ENCODE measurements at regions of chr17 and their contacts with region 1.

Region 1: DNA sequence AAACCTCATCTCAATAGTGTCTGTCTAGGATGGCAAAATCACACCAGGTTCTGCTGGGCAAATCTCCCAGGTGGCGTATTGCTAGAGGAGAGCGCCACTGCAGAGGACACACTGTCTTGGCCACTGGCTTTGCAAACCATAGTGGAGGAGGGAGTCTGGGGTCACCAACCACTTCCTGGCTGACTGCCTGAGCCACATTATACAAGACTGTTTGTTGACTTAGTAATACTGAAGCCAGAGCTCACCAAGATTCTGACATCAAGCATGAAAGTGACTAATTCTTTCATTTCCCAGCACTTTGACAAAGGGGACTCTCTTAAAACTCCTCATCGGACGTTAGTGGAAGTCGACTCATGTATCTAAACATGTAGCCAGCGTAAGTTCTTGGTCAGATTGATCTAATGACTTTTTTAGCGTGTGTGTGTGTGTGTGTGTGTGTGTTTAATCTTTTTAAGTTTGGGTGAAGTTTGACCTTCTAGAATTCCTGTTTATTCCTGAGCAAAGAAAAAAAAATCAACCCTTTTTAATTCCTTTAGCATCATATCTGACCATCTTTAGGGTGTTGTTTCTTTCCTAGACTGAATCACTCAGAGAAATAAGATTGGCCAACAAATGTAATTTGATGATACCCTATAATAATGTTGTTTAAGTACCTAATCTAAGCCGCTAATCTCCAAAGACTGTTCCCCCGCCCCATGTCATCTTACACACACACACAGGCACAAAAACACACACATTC is 13.7 kb downstream of the PITPNC1 start:
- DNase-seq: peak; percentile 96
- H3K4me3 ChIP-seq: peak overlapping the region in 1 of 3 experiments; percentile 26
- H3K27ac ChIP-seq: peak overlapping the region; percentile 84
- H3K4me1 ChIP-seq: peaks cover 16% of the 10 kb centered on the region
- H3K27me3 ChIP-seq: no peaks in the 10 kb centered on the region
- CTCF ChIP-seq: no peak

Region 2: DNA sequence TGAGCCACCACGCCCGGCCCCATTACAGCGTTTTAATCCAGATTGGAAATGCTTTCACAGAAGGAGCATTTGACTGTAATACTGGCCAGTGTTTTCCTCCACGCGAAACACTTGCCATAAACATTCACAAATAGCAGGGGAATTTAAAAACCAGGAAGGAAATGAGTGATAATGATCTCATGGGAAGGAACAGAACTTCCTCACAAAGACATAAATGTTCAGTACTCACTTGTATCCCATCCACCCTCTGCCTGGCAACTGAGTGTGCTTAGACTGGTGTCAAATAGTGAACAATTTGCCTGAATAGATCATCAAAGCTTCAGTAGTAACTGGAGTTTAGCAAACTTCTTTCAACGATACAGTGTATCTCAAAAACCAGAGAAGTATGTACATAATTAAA is 78.5 kb before region 1 on chr17:
- CTCF ChIA-PET with region 1: no interaction called
- dilution Hi-C with region 1: no loop called
- in situ Hi-C with region 1: no loop called
- intact Hi-C with region 1: no loop called
- DNase-seq: no peak
- H3K4me3 ChIP-seq: no peak overlapping the region
- H3K27ac ChIP-seq: no peak overlapping the region
- H3K4me1 ChIP-seq: no peaks in the 10 kb centered on the region
- H3K27me3 ChIP-seq: no peaks in the 10 kb centered on the region
- CTCF ChIP-seq: no peak

Region 3: GRCh38 chr17:67421869-67422273 is 31.1 kb after region 1 on chr17:
- CTCF ChIA-PET with region 1: no interaction called
- dilution Hi-C with region 1: loop called (anchors 5 kb)
- in situ Hi-C with region 1: no loop called
- intact Hi-C with region 1: loop called (anchors 2 kb)
- DNase-seq: peak; percentile 100
- H3K4me3 ChIP-seq: no peak overlapping the region
- H3K27ac ChIP-seq: peak overlapping the region; percentile 96
- H3K4me1 ChIP-seq: peaks cover 39% of the 10 kb centered on the region
- H3K27me3 ChIP-seq: no peaks in the 10 kb centered on the region
- CTCF ChIP-seq: no peak

Region 4: DNA sequence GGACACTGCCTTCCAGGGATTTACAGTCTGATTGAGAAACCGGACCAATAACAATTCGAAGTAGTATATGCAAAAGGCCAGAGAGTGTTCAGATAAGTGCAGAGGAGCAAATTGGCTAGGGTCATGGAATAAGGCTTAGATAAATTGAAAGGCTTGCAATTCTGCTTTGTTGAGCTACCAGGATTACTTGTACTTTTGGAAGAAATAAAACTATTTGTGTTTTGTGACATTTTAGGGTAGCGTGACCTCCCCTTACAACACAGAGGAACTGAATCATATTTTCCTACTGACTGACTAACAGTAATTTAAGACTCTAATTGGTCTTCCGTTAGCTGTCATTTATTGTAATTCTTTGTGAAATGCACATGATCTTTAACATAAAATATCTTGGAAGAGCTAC is 91.0 kb after region 1 on chr17:
- CTCF ChIA-PET with region 1: no interaction called
- dilution Hi-C with region 1: loop called (anchors 5 kb)
- in situ Hi-C with region 1: loop called in 1 of 2 experiments (anchors 5 kb)
- intact Hi-C with region 1: no loop called
- DNase-seq: no peak
- H3K4me3 ChIP-seq: no peak overlapping the region
- H3K27ac ChIP-seq: no peak overlapping the region
- H3K4me1 ChIP-seq: peaks cover 14% of the 10 kb centered on the region
- H3K27me3 ChIP-seq: no peaks in the 10 kb centered on the region
- CTCF ChIP-seq: no peak

Region 5: DNA sequence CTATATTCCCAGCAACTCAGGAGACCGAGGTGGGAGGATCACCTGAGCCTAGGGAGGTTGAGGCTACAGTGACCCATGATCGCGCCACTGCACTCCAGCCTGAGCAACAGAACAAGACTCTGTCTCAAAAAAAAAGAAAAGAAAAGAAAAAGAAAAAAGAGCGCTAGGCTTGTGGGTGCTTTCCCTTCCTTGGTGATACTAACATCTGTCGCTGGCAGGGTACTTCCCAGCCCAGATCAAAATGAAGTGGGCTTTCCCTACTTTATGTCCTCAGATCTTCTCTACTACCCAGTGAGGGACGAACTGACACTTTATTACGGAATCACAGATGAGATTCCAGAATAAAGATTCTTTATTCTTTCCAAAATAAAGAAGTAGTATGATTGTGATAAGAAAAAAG is 223.1 kb after region 1 on chr17:
- CTCF ChIA-PET with region 1: no interaction called
- dilution Hi-C with region 1: loop called (anchors 5 kb)
- in situ Hi-C with region 1: no loop called
- intact Hi-C with region 1: no loop called
- DNase-seq: no peak
- H3K4me3 ChIP-seq: no peak overlapping the region
- H3K27ac ChIP-seq: no peak overlapping the region
- H3K4me1 ChIP-seq: peaks cover 7% of the 10 kb centered on the region
- H3K27me3 ChIP-seq: no peaks in the 10 kb centered on the region
- CTCF ChIP-seq: no peak

Region 6: GRCh38 chr17:67689534-67690177 is 298.8 kb after region 1 on chr17:
- CTCF ChIA-PET with region 1: no interaction called
- dilution Hi-C with region 1: no loop called
- in situ Hi-C with region 1: no loop called
- intact Hi-C with region 1: loop called (anchors 1 kb)
- DNase-seq: peak; percentile 42
- H3K4me3 ChIP-seq: no peak overlapping the region
- H3K27ac ChIP-seq: no peak overlapping the region
- H3K4me1 ChIP-seq: no peaks in the 10 kb centered on the region
- H3K27me3 ChIP-seq: no peaks in the 10 kb centered on the region
- CTCF ChIP-seq: peak; percentile 67 to 73

Measured in mammary epithelial cell (primary cell).